H1 (cell line): ENCODE measurements at regions of chr12 and their contacts with region 1.

Region 1: GRCh38 chr12:6620137-6620884 is 13.1 kb upstream of the CHD4 start:
- DNase-seq: peak; percentile 80 to 91
- H3K4me3 ChIP-seq: peak overlapping the region; percentile 11 to 52 (median 16); a peak in 6 of 8 replicates
- H3K27ac ChIP-seq: no peak overlapping the region
- H3K4me1 ChIP-seq: peaks cover 3 to 7% (median 6%) of the 10 kb centered on the region in 4 experiments; a peak in 6 of 7 replicates
- H3K27me3 ChIP-seq: peaks cover 4 to 27% (median 21%) of the 10 kb centered on the region in 4 experiments; a peak in 6 of 7 replicates
- CTCF ChIP-seq: peak; percentile 89 to 99 (median 92)
- EP300 ChIP-seq: 0 out of 3 replicates have a peak, but pooled peaks of 1 of the 2 experiments have one; percentile 40
- POLR2A ChIP-seq: peak in 1 of 2 experiments; percentile 68; a peak in 1 of 3 replicates
- RAD21 ChIP-seq: peak; percentile 53 to 67; a peak in 3 of 4 replicates

Region 2: GRCh38 chr12:6607751-6608591 is 12.3 kb before region 1 on chr12:
- CTCF ChIA-PET with region 1: interaction called, 25 read pairs
- POLR2A ChIA-PET with region 1: interaction called, 24 read pairs
- DNase-seq: no peak
- H3K4me3 ChIP-seq: peak overlapping the region in 1 of 4 experiments; percentile 17; a peak in 3 of 8 replicates
- H3K27ac ChIP-seq: no peak overlapping the region
- H3K4me1 ChIP-seq: peaks cover 17 to 34% (median 23%) of the 10 kb centered on the region in 4 experiments
- H3K27me3 ChIP-seq: no peaks in the 10 kb centered on the region
- CTCF ChIP-seq: no peak
- EP300 ChIP-seq: no peak
- POLR2A ChIP-seq: no peak
- RAD21 ChIP-seq: no peak

Region 3: GRCh38 chr12:6638305-6638704 is 18.0 kb after region 1 on chr12:
- CTCF ChIA-PET with region 1: interaction called, 146 read pairs
- POLR2A ChIA-PET with region 1: interaction called, 18 read pairs
- DNase-seq: no peak
- H3K4me3 ChIP-seq: no peak overlapping the region
- H3K27ac ChIP-seq: no peak overlapping the region
- H3K4me1 ChIP-seq: peaks cover 0 to 8% (median 2%) of the 10 kb centered on the region in 4 experiments; a peak in 3 of 7 replicates
- H3K27me3 ChIP-seq: no peaks in the 10 kb centered on the region
- CTCF ChIP-seq: no peak
- EP300 ChIP-seq: no peak
- POLR2A ChIP-seq: no peak
- RAD21 ChIP-seq: no peak

Region 4: DNA sequence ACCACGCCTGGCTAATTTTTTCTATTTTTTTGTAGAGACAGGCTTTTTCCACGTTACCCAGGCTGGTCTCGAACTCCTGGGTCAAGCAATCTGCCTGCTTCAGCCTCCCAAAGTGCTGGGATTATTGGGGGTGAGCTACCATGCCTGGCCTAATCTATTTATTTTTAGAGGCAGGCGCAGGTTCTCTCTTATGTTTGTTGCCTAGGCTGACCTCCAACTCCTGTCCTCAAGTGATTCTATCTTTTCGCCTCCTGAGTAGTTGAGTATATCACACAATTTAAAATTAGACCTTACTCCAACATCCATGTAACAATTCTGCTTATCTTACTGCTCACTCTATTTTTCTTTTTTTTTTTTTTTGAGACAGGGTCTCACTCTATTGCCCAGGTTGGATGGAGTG is 33.7 kb after region 1 on chr12:
- CTCF ChIA-PET with region 1: interaction called, 22 read pairs
- POLR2A ChIA-PET with region 1: interaction called, 5 read pairs
- DNase-seq: no peak
- H3K4me3 ChIP-seq: no peak overlapping the region
- H3K27ac ChIP-seq: no peak overlapping the region
- H3K4me1 ChIP-seq: no peaks in the 10 kb centered on the region
- H3K27me3 ChIP-seq: no peaks in the 10 kb centered on the region
- CTCF ChIP-seq: no peak
- EP300 ChIP-seq: no peak
- POLR2A ChIP-seq: no peak
- RAD21 ChIP-seq: no peak

Region 5: GRCh38 chr12:6688999-6689882 is 68.9 kb after region 1 on chr12 and contains the start of gene ZNF384:
- CTCF ChIA-PET with region 1: interaction called, 21 read pairs
- POLR2A ChIA-PET with region 1: interaction called, 9 read pairs
- DNase-seq: peak; percentile 89 to 97
- H3K4me3 ChIP-seq: peak within 1 kb of the TSS; percentile 78 to 96 (median 88)
- H3K27ac ChIP-seq: peak within 1 kb of the TSS; percentile 90
- H3K4me1 ChIP-seq: peaks cover 0 to 9% (median 7%) of the 10 kb centered on the region in 4 experiments; a peak in 6 of 7 replicates
- H3K27me3 ChIP-seq: no peaks in the 10 kb centered on the region
- CTCF ChIP-seq: no peak
- EP300 ChIP-seq: peak in 1 of 2 experiments; percentile 62; a peak in 1 of 3 replicates
- POLR2A ChIP-seq: peak in 1 of 2 experiments; percentile 56; a peak in 1 of 3 replicates
- RAD21 ChIP-seq: no peak
- total RNA-seq, gene ZNF384: 59.6 and 60.1 TPM in 2 replicates

Region 6: GRCh38 chr12:6723607-6724396 is 103.5 kb after region 1 on chr12 and contains the start of gene COPS7A:
- CTCF ChIA-PET with region 1: interaction called, 12 read pairs
- POLR2A ChIA-PET with region 1: no interaction called
- DNase-seq: peak; percentile 95 to 98
- H3K4me3 ChIP-seq: peak within 1 kb of the TSS; percentile 58 to 91 (median 78)
- H3K27ac ChIP-seq: no peak within 1 kb of the TSS; the same call in 1 of the 2 replicates
- H3K4me1 ChIP-seq: peaks cover 0 to 2% (median under 1%) of the 10 kb centered on the region in 4 experiments; a peak in 3 of 7 replicates
- H3K27me3 ChIP-seq: no peaks in the 10 kb centered on the region; a peak in 2 of 7 replicates
- CTCF ChIP-seq: peak in 1 of 3 experiments; percentile 24; a peak in 1 of 4 replicates
- EP300 ChIP-seq: peak; percentile 21 to 63; a peak in 1 of 3 replicates
- POLR2A ChIP-seq: peak in 1 of 2 experiments; percentile 54; a peak in 2 of 3 replicates
- RAD21 ChIP-seq: 0 out of 4 replicates have a peak, but pooled peaks of 1 of the 2 experiments have one; percentile 2
- total RNA-seq, gene COPS7A: 43.3 and 44.5 TPM in 2 replicates